HepG2 (cell line): ENCODE measurements at regions of chr5 and their contacts with region 1.

Region 1: DNA sequence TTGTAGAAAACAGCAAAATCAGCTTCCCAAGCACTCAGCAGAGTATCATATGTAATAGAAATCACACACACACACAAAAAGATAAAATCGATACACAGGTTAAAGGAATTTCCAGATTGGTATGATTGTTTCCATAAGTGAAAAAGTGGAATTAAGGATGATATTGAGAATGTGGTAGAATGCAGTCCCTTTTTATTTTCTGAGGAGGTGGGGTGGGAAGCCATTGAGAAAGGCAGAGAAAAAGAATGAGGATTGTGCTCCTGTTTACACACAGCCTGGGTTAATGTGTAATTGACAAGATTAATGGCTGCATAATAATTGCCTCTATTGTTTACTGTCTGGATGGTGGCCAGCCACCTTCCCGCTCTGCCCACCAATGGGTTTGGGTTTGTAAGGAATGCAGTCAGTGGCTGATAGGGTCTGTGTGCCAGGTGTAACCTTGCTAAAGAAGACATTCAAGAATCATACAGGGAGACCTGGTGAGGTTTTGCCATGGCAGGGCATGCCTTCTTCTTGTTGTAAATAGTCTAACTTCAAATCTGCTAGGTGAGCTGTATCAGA is 177.2 kb upstream of the MAP3K1 start:
- DNase-seq: peak; percentile 94
- ATAC-seq: peak; percentile 92
- H3K4me3 ChIP-seq: peak overlapping the region in 2 of 3 experiments; percentile 24 to 41; a peak in 2 of 6 replicates
- H3K27ac ChIP-seq: peak overlapping the region; percentile 89
- H3K4me1 ChIP-seq: peaks cover 72% of the 10 kb centered on the region
- H3K27me3 ChIP-seq: no peaks in the 10 kb centered on the region
- CTCF ChIP-seq: no peak
- EP300 ChIP-seq: peak in 1 of 2 experiments; percentile 71; a peak in 2 of 4 replicates
- POLR2A ChIP-seq: no peak
- RAD21 ChIP-seq: no peak

Region 2: DNA sequence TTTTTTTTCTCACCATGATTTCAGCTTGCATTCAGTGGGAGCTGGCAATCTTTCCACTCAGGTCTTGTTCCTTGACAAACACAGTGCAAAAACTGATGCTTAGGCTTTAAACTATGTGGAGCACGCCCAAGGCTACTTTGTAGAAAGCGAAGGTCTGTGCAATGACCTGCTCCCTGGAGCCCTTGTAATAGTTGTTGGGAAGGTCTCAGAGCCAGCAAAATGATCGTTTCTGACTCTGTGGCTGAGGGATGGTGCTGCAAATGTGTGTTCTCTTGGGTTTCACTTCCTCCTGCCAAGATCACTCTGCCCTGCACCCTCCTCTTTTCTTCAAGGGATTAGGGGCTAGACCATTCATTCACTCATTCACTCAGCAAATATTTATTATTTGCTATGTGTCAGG is 72.5 kb before region 1 on chr5:
- CTCF ChIA-PET with region 1: no interaction called
- POLR2A ChIA-PET with region 1: no interaction called
- in situ Hi-C with region 1: no loop called
- intact Hi-C with region 1: loop called (anchors 10 kb)
- DNase-seq: no peak
- ATAC-seq: peak; percentile 54
- H3K4me3 ChIP-seq: peak overlapping the region in 1 of 3 experiments; percentile 1; a peak in 1 of 6 replicates
- H3K27ac ChIP-seq: no peak overlapping the region
- H3K4me1 ChIP-seq: peaks cover 32% of the 10 kb centered on the region
- H3K27me3 ChIP-seq: 0 out of 5 replicates have a peak, but pooled peaks cover 0 to 1% of the 10 kb centered on the region in 2 experiments
- CTCF ChIP-seq: no peak
- EP300 ChIP-seq: no peak
- POLR2A ChIP-seq: no peak
- RAD21 ChIP-seq: no peak

Region 3: DNA sequence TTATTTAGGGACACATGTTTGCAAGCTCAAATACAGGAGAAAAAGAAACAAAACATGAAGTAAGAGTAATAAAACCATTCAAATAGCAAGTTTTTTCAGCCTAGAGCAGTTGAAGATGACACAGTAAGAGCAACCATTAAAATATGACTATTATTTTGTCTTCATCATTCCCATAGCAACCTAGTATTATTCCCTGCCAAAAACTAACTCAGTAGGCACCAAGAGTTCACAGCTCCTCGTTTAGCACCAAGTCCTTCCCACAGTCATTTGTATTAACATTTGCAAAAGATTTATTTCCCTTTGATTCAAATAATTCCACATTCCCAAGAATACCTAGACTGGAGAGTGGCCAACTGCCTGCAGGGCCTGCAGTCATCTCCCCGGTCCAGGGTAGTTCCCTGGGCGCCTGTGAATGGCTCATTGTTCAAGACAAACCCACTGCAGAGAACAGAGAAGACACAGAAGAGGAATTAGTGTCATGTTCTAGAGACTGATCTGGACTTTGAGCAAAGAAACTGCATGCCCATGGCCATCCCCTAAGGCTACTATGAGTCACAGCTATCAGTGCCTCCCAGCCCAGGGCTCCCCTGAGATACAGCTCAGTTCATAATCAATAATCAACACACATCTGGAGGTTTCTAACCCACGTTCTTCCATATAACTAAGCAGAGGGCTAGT is 38.1 kb after region 1 on chr5:
- CTCF ChIA-PET with region 1: no interaction called
- POLR2A ChIA-PET with region 1: interaction called, 5 read pairs
- in situ Hi-C with region 1: no loop called
- intact Hi-C with region 1: loop called (anchors 5 kb)
- DNase-seq: peak; percentile 92
- ATAC-seq: peak; percentile 99
- H3K4me3 ChIP-seq: no peak overlapping the region
- H3K27ac ChIP-seq: peak overlapping the region; percentile 22
- H3K4me1 ChIP-seq: peaks cover 53% of the 10 kb centered on the region
- H3K27me3 ChIP-seq: no peaks in the 10 kb centered on the region
- CTCF ChIP-seq: no peak
- EP300 ChIP-seq: peak in 1 of 2 experiments; percentile 60; a peak in 2 of 4 replicates
- POLR2A ChIP-seq: no peak
- RAD21 ChIP-seq: no peak

Region 4: DNA sequence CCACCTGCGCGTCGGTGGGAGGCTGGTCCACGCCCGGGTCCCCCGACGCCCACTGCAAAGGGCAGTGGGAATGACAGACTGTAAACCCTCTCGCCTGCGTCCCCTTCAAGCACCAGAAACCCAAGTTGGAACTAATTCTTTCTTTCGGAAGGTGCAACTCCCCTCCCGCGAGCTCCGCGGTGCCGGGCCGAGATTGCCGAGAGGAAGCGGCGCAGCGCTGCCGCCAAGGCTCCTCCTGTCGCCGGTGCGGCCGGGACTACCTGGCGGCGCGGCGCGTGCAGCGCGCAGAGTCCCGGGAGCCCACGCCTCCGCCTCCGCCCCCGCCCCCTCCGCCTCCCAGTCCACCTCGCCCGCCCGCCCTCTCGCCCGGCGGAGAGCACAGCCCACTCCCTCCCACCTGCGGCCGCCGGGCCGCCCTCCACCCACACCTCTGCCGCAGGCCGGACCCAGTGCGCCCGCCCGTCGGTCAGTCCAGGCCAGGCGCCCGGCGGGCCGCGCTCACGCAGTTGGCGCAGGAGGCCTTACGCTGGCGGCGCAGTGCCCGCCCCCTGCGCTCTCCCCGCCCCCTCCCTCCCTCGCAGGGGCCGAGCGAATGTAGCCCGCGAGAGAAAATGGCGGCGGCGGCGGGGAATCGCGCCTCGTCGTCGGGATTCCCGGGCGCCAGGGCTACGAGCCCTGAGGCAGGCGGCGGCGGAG is 177.0 kb after region 1 on chr5 and contains the start of gene MAP3K1:
- CTCF ChIA-PET with region 1: no interaction called
- POLR2A ChIA-PET with region 1: no interaction called
- in situ Hi-C with region 1: no loop called
- intact Hi-C with region 1: loop called (anchors 5 kb)
- DNase-seq: peak; percentile 82
- ATAC-seq: peak; percentile 84
- H3K4me3 ChIP-seq: peak within 1 kb of the TSS; percentile 88 to 95 (median 89)
- H3K27ac ChIP-seq: peak within 1 kb of the TSS; percentile 93
- H3K4me1 ChIP-seq: peaks cover 43% of the 10 kb centered on the region
- H3K27me3 ChIP-seq: no peaks in the 10 kb centered on the region; a peak in 1 of 5 replicates
- CTCF ChIP-seq: peak; percentile 9; the same call in 1 of the 2 replicates
- EP300 ChIP-seq: no peak
- POLR2A ChIP-seq: peak; percentile 62 to 73; a peak in 3 of 4 replicates
- RAD21 ChIP-seq: peak; percentile 27
- total RNA-seq, gene MAP3K1: 30.3 and 44.1 TPM in 2 replicates

Region 5: DNA sequence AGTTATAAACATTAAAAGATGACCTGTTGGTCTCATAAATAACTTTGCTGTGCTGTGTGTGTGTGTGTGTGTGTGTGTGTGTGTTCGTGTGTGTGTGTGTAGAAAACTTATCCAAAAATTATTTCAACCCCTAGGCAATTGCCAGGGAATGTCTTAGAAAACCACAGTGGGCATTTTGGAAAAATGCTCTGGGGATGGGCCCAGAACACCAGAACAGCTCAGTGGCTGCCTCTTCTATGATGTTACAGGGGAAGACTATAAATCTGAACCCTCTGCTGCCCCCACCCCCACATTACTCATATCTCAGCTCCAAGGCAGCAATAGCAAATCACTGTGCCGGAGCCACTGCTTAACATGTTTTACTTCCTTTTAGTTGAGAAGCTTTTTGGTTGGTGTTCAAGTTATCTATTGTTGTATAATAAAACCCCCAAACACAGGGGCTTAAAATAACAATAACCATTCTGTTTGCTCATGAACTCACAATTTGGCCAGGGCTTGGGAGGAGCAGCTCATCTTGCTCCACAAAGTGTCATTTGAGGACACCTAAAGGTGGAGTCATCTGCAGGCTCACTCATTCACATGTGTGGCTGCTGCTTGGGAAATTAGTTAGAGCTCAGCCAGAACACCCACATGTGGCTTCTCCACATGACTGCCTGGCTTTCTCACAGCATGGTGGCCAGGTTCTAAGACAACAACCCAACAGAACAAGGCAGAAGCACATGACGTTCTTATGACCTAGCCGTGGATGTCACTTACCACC is 804.1 kb after region 1 on chr5:
- CTCF ChIA-PET with region 1: no interaction called
- POLR2A ChIA-PET with region 1: no interaction called
- in situ Hi-C with region 1: no loop called
- intact Hi-C with region 1: no loop called
- DNase-seq: no peak
- ATAC-seq: no peak
- H3K4me3 ChIP-seq: no peak overlapping the region
- H3K27ac ChIP-seq: no peak overlapping the region
- H3K4me1 ChIP-seq: no peaks in the 10 kb centered on the region
- H3K27me3 ChIP-seq: 0 out of 5 replicates have a peak, but pooled peaks cover 0 to 3% of the 10 kb centered on the region in 2 experiments
- CTCF ChIP-seq: no peak
- EP300 ChIP-seq: no peak
- POLR2A ChIP-seq: no peak
- RAD21 ChIP-seq: no peak